Activated B cell treated with CpG ODN at 0.5 μM for 24 hours (primary cell): ENCODE measurements at regions of chr18 and their contacts with region 1.

Region 1: DNA sequence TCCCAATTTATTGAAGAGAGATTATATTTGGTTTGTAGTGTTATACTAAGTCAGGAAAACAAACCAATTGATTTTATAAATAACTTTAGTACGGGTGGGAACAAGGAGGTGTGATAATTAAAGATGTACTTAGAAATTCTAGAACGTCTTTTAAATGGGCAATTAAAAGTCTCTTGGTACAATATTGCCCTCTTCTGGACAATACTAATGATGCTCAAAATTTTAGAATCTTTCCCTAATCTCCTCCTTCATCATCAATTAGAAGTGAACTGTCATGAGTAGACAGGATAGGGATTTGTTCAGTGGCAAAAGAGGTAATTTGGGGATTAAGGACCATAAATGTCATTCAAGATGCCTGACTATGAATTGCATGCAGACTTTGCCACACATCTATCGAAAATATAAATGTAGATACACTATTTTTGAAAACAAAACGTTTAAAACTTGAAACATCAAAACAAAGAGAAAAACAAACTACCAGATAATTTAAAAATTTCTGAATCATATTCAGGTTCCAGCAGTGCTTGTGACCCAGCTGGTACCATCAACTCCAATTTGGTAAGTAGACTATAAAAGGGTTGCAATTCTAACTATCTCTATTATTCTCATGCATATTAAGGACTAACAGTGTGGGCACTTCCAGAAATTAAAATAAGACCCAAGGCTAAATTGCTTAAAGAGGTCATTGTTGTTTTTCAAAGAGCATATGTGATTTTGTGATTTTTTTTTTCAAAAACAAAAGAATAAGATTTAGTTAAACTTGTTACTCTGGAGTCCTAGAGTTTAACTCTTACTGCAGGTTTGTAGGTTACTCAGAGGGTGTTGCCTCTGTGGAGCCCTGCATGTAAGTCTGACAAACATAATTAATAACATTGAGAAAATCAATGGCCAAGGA is 123.5 kb downstream of the LAMA3 start:
- DNase-seq: no peak
- ATAC-seq: no peak
- H3K4me3 Mint-ChIP-seq: no peak overlapping the region
- H3K27ac Mint-ChIP-seq: no peak overlapping the region
- H3K4me1 Mint-ChIP-seq: peaks cover 11% of the 10 kb centered on the region
- H3K27me3 Mint-ChIP-seq: no peaks in the 10 kb centered on the region
- CTCF ChIP-seq: no peak

Region 2: DNA sequence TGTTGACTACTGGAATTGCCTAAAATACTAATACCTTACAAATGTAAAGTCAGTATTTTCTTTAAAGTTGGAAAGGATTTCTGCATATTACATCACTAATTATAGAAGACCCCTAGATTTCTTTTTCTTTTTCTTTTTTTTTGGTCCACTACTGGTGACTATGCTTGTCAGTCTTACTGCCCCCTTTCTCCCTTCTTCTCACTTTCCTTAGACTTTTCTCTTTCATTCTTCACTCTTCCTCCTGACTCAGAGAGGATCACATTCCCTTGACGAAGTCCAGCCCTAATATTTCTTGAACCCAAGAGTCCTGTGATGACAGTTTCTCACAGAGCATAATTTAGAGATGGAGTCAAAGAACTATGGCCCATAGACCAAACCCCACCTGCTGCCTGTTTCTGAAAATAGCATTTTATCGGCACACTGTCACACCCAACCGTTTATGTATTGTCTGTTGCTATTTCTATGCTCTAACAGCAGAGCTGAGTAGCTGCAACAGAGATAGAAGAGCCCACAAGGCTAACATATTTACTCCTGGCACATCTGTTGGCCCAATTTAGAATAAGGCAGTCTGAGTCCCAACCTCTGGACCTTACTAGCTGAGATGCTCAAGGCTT is 400.3 kb before region 1 on chr18:
- CTCF ChIA-PET with region 1: no interaction called
- POLR2A ChIA-PET with region 1: no interaction called
- intact Hi-C with region 1: loop called (anchors 5 kb)
- DNase-seq: no peak
- ATAC-seq: no peak
- H3K4me3 Mint-ChIP-seq: no peak overlapping the region
- H3K27ac Mint-ChIP-seq: no peak overlapping the region
- H3K4me1 Mint-ChIP-seq: peaks cover 7% of the 10 kb centered on the region
- H3K27me3 Mint-ChIP-seq: no peaks in the 10 kb centered on the region
- CTCF ChIP-seq: no peak

Region 3: DNA sequence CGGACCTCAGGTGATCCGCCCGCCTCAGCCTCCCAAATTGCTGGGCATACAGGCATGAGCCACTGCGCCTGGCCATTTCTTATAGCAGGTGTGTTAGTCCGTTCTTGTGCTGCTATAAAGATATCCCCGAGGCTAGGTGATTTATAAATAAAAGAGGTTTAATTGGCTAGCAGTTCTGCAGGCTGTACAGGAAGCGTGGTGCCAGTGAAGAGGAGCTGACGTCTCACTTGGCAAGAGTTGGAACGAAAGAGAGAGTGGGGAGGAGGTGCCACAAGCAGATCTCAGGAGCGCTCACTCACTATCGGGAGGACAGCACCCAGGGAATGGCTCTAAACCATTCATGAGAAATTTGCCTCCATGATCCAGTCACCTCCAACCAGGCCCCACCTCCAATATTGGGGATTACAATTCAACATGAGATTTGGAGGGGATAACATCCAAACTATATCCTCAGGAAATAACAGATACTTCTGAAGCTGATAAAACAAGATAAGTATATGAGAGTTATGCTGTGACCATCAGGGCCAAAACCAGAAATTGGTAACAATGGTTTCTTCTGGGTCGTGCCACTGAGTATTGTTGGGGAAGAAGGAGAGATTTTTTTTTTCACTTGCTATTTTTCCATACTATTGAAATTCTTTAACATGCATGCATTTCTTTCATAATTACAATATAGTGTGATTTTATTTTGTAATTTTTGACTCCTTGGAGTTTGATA is 316.9 kb before region 1 on chr18:
- CTCF ChIA-PET with region 1: no interaction called
- POLR2A ChIA-PET with region 1: no interaction called
- intact Hi-C with region 1: no loop called
- DNase-seq: no peak
- ATAC-seq: peak; percentile 40
- H3K4me3 Mint-ChIP-seq: peak overlapping the region; percentile 85
- H3K27ac Mint-ChIP-seq: peak overlapping the region; percentile 93
- H3K4me1 Mint-ChIP-seq: peaks cover 62% of the 10 kb centered on the region
- H3K27me3 Mint-ChIP-seq: no peaks in the 10 kb centered on the region
- CTCF ChIP-seq: no peak

Region 4: GRCh38 chr18:23515911-23516546 is 296.8 kb before region 1 on chr18:
- CTCF ChIA-PET with region 1: interaction called, 4 read pairs
- POLR2A ChIA-PET with region 1: no interaction called
- intact Hi-C with region 1: loop called (anchors 2 kb)
- DNase-seq: peak; percentile 42
- ATAC-seq: peak; percentile 97
- H3K4me3 Mint-ChIP-seq: no peak overlapping the region
- H3K27ac Mint-ChIP-seq: peak overlapping the region; percentile 74
- H3K4me1 Mint-ChIP-seq: peaks cover 35% of the 10 kb centered on the region
- H3K27me3 Mint-ChIP-seq: no peaks in the 10 kb centered on the region
- CTCF ChIP-seq: peak; percentile 78

Region 5: GRCh38 chr18:23619388-23619881 is 193.4 kb before region 1 on chr18:
- CTCF ChIA-PET with region 1: interaction called, 9 read pairs
- POLR2A ChIA-PET with region 1: no interaction called
- intact Hi-C with region 1: loop called (anchors 1 kb)
- DNase-seq: peak; percentile 18
- ATAC-seq: peak; percentile 36
- H3K4me3 Mint-ChIP-seq: peak overlapping the region; percentile 63
- H3K27ac Mint-ChIP-seq: no peak overlapping the region
- H3K4me1 Mint-ChIP-seq: peaks cover 17% of the 10 kb centered on the region
- H3K27me3 Mint-ChIP-seq: peaks cover 34% of the 10 kb centered on the region
- CTCF ChIP-seq: no peak